ENCODE measurements at regions of chr3 and their contacts with region 1.

Region 1: DNA sequence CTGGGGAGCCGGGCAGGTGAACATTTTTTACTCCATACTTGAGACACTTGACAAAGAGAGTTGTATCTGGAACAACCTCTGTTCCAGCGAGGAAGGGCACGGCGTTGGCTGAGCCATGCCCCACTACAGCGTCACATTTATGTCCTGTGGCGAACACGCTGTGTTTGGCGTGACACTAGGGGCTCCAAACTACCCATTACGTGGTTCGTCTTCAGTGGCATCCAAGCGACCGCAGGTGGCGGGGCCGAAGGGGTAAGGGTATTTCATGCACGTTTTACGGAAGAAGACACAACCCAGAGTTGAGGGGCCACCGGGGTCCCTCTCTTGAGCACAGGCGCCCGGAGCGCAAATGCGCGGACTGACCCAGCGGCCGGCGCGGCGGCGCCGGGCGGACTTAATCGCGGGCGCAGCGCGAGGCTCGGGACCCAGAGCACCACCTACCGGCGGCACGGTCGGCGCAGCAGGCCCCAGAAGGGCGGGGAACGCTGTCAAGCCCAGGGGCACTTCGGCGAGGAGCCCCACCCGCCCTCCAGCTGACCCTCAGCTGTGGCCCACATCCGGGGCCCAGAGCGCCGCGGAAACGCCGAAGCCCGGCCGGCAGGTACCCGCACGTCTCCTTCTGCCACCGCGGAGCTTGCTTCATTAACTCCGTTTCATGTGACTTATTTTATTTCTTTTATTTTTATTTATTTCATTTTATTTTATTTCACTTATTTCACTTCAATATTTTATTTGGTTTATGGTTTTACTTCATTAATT is 36.4 kb upstream of the TRIM71 start:
- DNase-seq: peak; percentile 76
- H3K4me3 Mint-ChIP-seq: peak overlapping the region; percentile 84
- H3K27ac Mint-ChIP-seq: no peak overlapping the region
- H3K4me1 Mint-ChIP-seq: peaks cover 9% of the 10 kb centered on the region
- H3K27me3 Mint-ChIP-seq: no peaks in the 10 kb centered on the region
- CTCF ChIP-seq: peak; percentile 68

Region 2: DNA sequence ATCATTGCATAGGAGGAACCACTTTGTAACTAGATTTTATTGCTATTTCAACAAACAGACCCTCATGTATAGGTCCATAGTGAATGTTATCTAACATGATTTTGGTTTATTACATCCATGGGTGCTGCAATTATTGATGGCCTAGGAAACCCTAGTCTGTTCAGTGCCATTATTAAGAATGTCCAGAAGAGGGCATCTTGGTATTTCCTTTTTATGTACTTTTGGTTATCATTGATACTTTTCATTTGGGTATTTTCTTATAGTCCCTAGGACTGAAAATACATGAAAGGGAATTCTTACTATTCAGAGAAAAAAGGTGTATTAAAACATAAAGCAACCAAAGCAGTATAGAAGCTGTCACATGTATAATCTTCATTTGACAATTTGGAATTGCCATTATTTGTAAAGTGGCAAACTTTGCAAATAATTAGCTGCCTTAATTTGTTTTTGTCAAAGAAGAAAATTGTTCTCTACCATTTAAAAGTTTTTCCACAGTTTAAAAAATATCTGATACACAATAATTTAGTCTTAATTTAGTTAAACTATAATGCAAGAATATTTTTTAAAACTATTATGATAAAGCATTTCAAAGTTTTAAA is 47.7 kb before region 1 on chr3:
- CTCF ChIA-PET with region 1: interaction called, 5 read pairs
- POLR2A ChIA-PET with region 1: no interaction called
- intact Hi-C with region 1: loop called (anchors 5 kb)
- DNase-seq: peak; percentile 45
- H3K4me3 Mint-ChIP-seq: no peak overlapping the region
- H3K27ac Mint-ChIP-seq: no peak overlapping the region
- H3K4me1 Mint-ChIP-seq: no peaks in the 10 kb centered on the region
- H3K27me3 Mint-ChIP-seq: no peaks in the 10 kb centered on the region
- CTCF ChIP-seq: peak; percentile 49

Region 3: GRCh38 chr3:32759342-32759741 is 22.0 kb before region 1 on chr3:
- CTCF ChIA-PET with region 1: interaction called, 10 read pairs
- POLR2A ChIA-PET with region 1: no interaction called
- intact Hi-C with region 1: no loop called
- DNase-seq: no peak
- H3K4me3 Mint-ChIP-seq: no peak overlapping the region
- H3K27ac Mint-ChIP-seq: no peak overlapping the region
- H3K4me1 Mint-ChIP-seq: no peaks in the 10 kb centered on the region
- H3K27me3 Mint-ChIP-seq: no peaks in the 10 kb centered on the region
- CTCF ChIP-seq: no peak

Region 4: GRCh38 chr3:32922078-32922477 is 140.7 kb after region 1 on chr3:
- CTCF ChIA-PET with region 1: interaction called, 11 read pairs
- POLR2A ChIA-PET with region 1: interaction called, 7 read pairs
- intact Hi-C with region 1: no loop called
- DNase-seq: no peak
- H3K4me3 Mint-ChIP-seq: no peak overlapping the region
- H3K27ac Mint-ChIP-seq: peak overlapping the region; percentile 69
- H3K4me1 Mint-ChIP-seq: peaks cover 9% of the 10 kb centered on the region
- H3K27me3 Mint-ChIP-seq: no peaks in the 10 kb centered on the region
- CTCF ChIP-seq: no peak

Region 5: GRCh38 chr3:32934150-32934742 is 152.9 kb after region 1 on chr3:
- CTCF ChIA-PET with region 1: interaction called, 18 read pairs
- POLR2A ChIA-PET with region 1: no interaction called
- intact Hi-C with region 1: loop called (anchors 1 kb)
- DNase-seq: peak; percentile 42
- H3K4me3 Mint-ChIP-seq: no peak overlapping the region
- H3K27ac Mint-ChIP-seq: no peak overlapping the region
- H3K4me1 Mint-ChIP-seq: peaks cover 14% of the 10 kb centered on the region
- H3K27me3 Mint-ChIP-seq: no peaks in the 10 kb centered on the region
- CTCF ChIP-seq: peak; percentile 67

Measured in MCF 10A (cell line).